Activated T-helper 1 cell treated with anti-CD3 and anti-CD28 coated beads, Interleukin-12 subunit alpha, Interleukin-12 subunit beta, Interleukin-2, Interleukin-4 antibody, amounts not matched to agents 30 ng/mL and 10 ng/mL and 1 ng/mL, durations not matched to agents 14 hours and 24 hours and 36 hours (primary cell): ENCODE measurements at regions of chr5 and their contacts with region 1.

Region 1: DNA sequence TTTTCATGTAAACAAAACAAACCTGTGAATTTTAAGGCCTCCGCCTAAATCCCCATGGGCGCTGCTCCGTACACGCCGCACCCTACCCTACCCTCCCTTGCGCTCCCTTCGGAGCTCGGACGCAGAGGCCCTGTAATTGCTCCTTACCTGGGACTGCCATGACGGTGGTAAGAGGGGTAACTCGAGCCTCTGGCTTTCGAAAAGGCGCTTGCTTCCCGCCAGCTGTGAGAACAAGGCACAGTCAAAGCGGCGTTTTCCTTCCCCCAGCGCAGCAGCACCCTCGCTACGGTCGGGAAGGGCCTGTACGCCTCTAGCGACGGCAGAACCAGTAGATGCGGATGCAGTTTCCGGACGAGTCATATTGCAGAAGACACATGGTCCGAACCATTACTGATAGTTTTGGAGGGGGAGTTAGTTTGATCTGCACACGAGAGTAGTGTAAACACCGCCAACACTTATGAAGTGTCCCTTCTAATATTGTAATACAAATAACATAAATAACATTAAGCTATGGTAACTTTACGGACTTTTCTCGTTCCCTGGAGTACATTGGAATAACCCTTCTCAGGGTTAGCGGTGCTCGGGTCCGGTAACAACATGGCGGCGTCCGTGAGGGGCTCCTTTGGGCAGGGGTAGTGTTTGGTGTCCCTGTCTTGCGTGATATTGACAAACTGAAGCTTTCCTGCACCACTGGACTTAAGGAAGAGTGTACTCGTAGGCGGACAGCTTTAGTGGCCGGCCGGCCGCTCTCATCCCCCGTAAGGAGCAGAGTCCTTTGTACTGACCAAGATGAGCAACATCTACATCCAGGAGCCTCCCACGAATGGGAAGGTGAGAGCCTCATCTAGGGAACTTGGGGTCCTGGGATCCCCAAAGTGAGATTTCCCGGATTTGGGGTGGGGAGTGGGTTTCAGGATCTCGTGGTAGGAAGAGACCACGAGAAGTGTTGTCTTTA is at the starts of genes CWC27 and SREK1IP1:
- DNase-seq: peak; percentile 79
- H3K4me3 Mint-ChIP-seq: peak within 1 kb of the TSS; percentile 98
- H3K27ac Mint-ChIP-seq: peak within 1 kb of the TSS; percentile 96
- H3K4me1 Mint-ChIP-seq: peaks cover 51% of the 10 kb centered on the region
- H3K27me3 Mint-ChIP-seq: no peaks in the 10 kb centered on the region
- total RNA-seq, gene CWC27: 29.1 and 33.5 TPM in 2 replicates
- total RNA-seq, gene SREK1IP1: 29.4 and 31.7 TPM in 2 replicates

Region 2: DNA sequence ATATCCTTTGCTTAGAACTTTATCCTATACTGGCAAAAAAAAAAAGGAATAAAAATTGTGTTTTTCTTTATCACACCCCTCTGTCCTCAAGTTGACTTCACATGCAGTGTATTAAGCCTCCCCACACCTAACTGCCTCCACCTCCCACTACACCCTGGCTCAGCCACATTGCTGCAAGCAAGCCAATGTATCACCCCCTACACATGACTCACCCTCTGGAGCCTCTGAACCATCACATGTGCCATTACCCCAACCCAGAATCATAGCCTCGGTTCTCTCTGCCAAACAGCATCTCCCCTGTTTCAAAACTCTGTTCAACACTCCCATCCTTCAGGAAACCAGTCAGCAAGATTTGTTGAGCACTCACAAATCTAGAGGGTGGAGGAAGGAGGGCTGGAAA is 209.1 kb after region 1 on chr5:
- intact Hi-C with region 1: no loop called
- DNase-seq: no peak
- H3K4me3 Mint-ChIP-seq: no peak overlapping the region
- H3K27ac Mint-ChIP-seq: no peak overlapping the region
- H3K4me1 Mint-ChIP-seq: peaks cover 6% of the 10 kb centered on the region
- H3K27me3 Mint-ChIP-seq: no peaks in the 10 kb centered on the region

Region 3: GRCh38 chr5:65468633-65469032 is 700.0 kb after region 1 on chr5:
- intact Hi-C with region 1: no loop called
- DNase-seq: no peak
- H3K4me3 Mint-ChIP-seq: no peak overlapping the region
- H3K27ac Mint-ChIP-seq: no peak overlapping the region
- H3K4me1 Mint-ChIP-seq: no peaks in the 10 kb centered on the region
- H3K27me3 Mint-ChIP-seq: peaks cover 8% of the 10 kb centered on the region

Region 4: GRCh38 chr5:65562731-65563701 is 794.4 kb after region 1 on chr5 and contains the starts of genes CENPK and PPWD1:
- intact Hi-C with region 1: loop called (anchors 1 kb)
- DNase-seq: peak; percentile 94
- H3K4me3 Mint-ChIP-seq: peak within 1 kb of the TSS; percentile 95
- H3K27ac Mint-ChIP-seq: peak within 1 kb of the TSS; percentile 99
- H3K4me1 Mint-ChIP-seq: peaks cover 53% of the 10 kb centered on the region
- H3K27me3 Mint-ChIP-seq: no peaks in the 10 kb centered on the region
- total RNA-seq, gene CENPK: 81.0 and 85.1 TPM in 2 replicates
- total RNA-seq, gene PPWD1: 63.6 and 65.4 TPM in 2 replicates